CD4-positive, alpha-beta memory T cell (primary cell): ENCODE measurements at regions of chr5 and their contacts with region 1.

Region 1: DNA sequence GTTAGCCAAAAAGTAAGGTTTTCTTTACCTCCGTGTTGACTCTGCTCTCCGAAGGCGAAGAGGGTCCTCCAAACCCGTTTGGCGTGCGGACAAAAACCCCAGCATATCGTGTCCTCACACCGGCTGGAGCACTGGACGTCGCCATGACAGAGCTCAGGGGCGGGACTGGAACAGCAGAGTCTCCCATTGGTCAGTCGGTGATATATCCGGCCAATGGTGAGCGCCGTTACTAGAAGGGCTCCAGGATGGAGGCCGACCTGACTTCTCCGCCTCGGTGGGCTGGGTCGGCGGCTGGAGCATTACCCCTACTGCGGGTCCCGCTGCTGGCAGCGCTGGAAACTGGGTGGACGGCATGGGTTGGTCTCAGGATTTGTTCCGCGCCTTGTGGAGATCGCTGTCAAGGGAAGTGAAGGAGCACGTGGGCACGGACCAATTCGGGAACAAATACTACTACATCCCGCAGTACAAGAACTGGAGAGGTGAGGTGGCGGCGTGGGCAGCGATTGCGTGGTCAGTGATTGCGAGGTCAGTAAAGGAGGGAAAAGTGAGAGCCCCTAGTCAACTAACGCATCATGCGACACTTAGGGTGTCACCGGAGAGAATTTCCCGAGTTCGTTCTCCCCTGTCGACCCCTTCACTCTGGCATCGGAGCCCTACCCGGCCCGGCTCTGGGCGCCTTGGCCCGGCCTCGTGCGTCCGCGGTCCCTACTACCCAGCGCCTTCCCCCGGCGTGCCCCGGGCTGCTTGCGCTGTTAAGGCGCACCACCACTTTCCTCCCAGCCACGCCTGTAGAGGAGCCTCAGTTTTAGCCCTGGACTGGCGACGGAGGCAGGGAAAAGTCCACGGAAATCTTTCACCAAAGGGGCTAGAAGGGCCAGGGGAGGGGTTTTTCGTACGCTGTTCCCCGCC is at the starts of genes ERCC8 and NDUFAF2:
- DNase-seq: peak; percentile 86 to 90 (median 89)
- H3K4me3 ChIP-seq: peak within 1 kb of the TSS; percentile 92 to 94
- H3K4me3 Mint-ChIP-seq: no peak within 1 kb of the TSS
- H3K27ac ChIP-seq: peak within 1 kb of the TSS; percentile 60
- H3K27ac Mint-ChIP-seq: peak within 1 kb of the TSS in 3 of 7 donors; percentile 45 to 89 (median 75)
- H3K4me1 ChIP-seq: peaks cover 21% of the 10 kb centered on the region
- H3K4me1 Mint-ChIP-seq: peaks cover 18 to 28% (median 23%) of the 10 kb centered on the region in 4 donors
- H3K27me3 ChIP-seq: no peaks in the 10 kb centered on the region
- H3K27me3 Mint-ChIP-seq: no peaks in the 10 kb centered on the region
- total RNA-seq, gene ERCC8: 7.1 to 9.0 TPM
- total RNA-seq, gene NDUFAF2: 14.7 to 14.8 TPM

Region 2: GRCh38 chr5:60699530-60700382 is 245.4 kb before region 1 on chr5 and contains the start of gene DEPDC1B:
- CTCF ChIA-PET with region 1: no interaction called
- POLR2A ChIA-PET with region 1: interaction called, 3 read pairs
- intact Hi-C with region 1: loop called (anchors 2 kb)
- DNase-seq: peak; percentile 81 to 86 (median 83)
- H3K4me3 ChIP-seq: peak within 1 kb of the TSS; percentile 98 to 99
- H3K4me3 Mint-ChIP-seq: peak within 1 kb of the TSS; percentile 91 to 98 (median 94)
- H3K27ac ChIP-seq: peak within 1 kb of the TSS; percentile 61
- H3K27ac Mint-ChIP-seq: peak within 1 kb of the TSS; percentile 75 to 92 (median 88)
- H3K4me1 ChIP-seq: peaks cover 18% of the 10 kb centered on the region
- H3K4me1 Mint-ChIP-seq: peaks cover 9 to 28% (median 20%) of the 10 kb centered on the region in 4 donors
- H3K27me3 ChIP-seq: no peaks in the 10 kb centered on the region
- H3K27me3 Mint-ChIP-seq: no peaks in the 10 kb centered on the region
- total RNA-seq, gene DEPDC1B: 0.19 to 0.70 TPM

Region 3: GRCh38 chr5:60896991-60897390 is 48.2 kb before region 1 on chr5:
- CTCF ChIA-PET with region 1: no interaction called
- POLR2A ChIA-PET with region 1: no interaction called
- intact Hi-C with region 1: no loop called
- DNase-seq: no peak
- H3K4me3 ChIP-seq: no peak overlapping the region
- H3K4me3 Mint-ChIP-seq: no peak overlapping the region
- H3K27ac ChIP-seq: no peak overlapping the region
- H3K27ac Mint-ChIP-seq: no peak overlapping the region
- H3K4me1 ChIP-seq: no peaks in the 10 kb centered on the region
- H3K4me1 Mint-ChIP-seq: peaks cover 0 to 2% (median 0%) of the 10 kb centered on the region in 4 donors
- H3K27me3 ChIP-seq: no peaks in the 10 kb centered on the region
- H3K27me3 Mint-ChIP-seq: no peaks in the 10 kb centered on the region

Region 4: DNA sequence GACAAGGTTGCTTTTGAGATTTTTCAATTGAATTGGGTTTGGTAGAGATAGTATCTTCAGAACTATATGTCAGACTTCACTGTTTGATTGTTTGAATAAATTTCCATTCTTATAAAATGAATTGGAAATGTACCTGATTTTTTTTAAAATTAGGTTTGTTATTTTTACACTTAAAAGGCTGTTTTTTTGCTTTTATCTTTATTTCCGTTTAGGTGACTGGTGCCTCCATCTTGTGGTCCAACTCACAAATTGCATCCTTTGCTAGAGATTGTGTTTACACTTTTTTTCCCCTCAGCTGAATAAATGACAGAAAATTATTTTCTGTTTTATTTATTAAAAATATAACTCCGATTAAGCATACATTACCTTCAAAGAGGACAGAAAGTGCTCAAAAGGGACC is 15.4 kb after region 1 on chr5:
- CTCF ChIA-PET with region 1: interaction called, 9 read pairs
- POLR2A ChIA-PET with region 1: interaction called, 5 read pairs
- intact Hi-C with region 1: loop called (anchors 1 kb)
- DNase-seq: peak in 4 of 5 donors; percentile 8 to 24 (median 20)
- H3K4me3 ChIP-seq: no peak overlapping the region
- H3K4me3 Mint-ChIP-seq: no peak overlapping the region
- H3K27ac ChIP-seq: no peak overlapping the region
- H3K27ac Mint-ChIP-seq: no peak overlapping the region
- H3K4me1 ChIP-seq: peaks cover 8% of the 10 kb centered on the region
- H3K4me1 Mint-ChIP-seq: peaks cover 5 to 13% (median 9%) of the 10 kb centered on the region in 4 donors
- H3K27me3 ChIP-seq: no peaks in the 10 kb centered on the region
- H3K27me3 Mint-ChIP-seq: no peaks in the 10 kb centered on the region

Region 5: GRCh38 chr5:61162010-61162831 is 217.1 kb after region 1 on chr5 and contains the start of gene SMIM15:
- CTCF ChIA-PET with region 1: no interaction called
- POLR2A ChIA-PET with region 1: no interaction called
- intact Hi-C with region 1: loop called (anchors 5 kb)
- DNase-seq: peak; percentile 67 to 77 (median 72)
- H3K4me3 ChIP-seq: peak within 1 kb of the TSS; percentile 88
- H3K4me3 Mint-ChIP-seq: peak within 1 kb of the TSS; percentile 92 to 100 (median 96)
- H3K27ac ChIP-seq: peak within 1 kb of the TSS; percentile 67
- H3K27ac Mint-ChIP-seq: peak within 1 kb of the TSS; percentile 89 to 99 (median 96)
- H3K4me1 ChIP-seq: peaks cover 26% of the 10 kb centered on the region
- H3K4me1 Mint-ChIP-seq: peaks cover 29 to 46% (median 38%) of the 10 kb centered on the region in 4 donors
- H3K27me3 ChIP-seq: no peaks in the 10 kb centered on the region
- H3K27me3 Mint-ChIP-seq: no peaks in the 10 kb centered on the region
- total RNA-seq, gene SMIM15: 33.1 to 37.7 TPM

Region 6: DNA sequence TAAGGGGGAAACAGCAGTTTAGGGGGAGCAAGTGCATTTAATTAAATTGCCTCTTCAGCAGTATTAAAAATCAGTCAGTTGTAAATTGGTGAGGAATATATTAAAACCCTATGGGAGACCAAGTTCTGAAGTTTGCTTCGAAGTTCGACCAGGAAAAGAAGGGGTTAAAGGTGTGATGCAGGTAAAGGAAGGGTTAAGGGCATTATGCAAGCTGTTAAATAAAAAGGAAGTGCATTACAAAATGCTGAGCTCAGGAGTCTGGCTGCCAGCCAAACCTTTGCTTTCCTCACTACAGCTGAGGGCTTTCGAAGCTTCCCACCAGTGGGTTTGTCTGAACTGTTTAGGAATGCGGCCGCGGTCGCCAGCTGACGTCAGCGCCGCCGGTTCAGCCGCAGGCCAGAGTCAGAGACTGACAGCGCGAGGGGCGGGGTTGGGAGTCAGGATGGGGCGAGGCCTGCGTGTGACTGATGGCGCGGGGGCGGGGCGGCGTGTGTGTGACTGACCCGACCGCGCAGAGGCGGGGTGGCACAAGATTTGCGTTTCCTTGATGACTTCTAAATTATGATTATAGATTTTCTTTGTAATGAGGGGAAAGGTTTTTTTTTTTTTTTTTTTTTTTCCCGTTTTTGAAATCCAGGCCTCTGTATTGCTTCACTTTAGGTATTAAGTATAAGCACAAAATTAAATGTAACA is 463.5 kb after region 1 on chr5:
- CTCF ChIA-PET with region 1: no interaction called
- POLR2A ChIA-PET with region 1: no interaction called
- intact Hi-C with region 1: loop called (anchors 1 kb)
- DNase-seq: peak; percentile 96 to 99 (median 98)
- H3K4me3 ChIP-seq: no peak overlapping the region
- H3K4me3 Mint-ChIP-seq: peak overlapping the region; percentile 78 to 91 (median 84)
- H3K27ac ChIP-seq: no peak overlapping the region
- H3K27ac Mint-ChIP-seq: peak overlapping the region; percentile 86 to 97 (median 94)
- H3K4me1 ChIP-seq: peaks cover 19% of the 10 kb centered on the region
- H3K4me1 Mint-ChIP-seq: peaks cover 18 to 35% (median 26%) of the 10 kb centered on the region in 4 donors
- H3K27me3 ChIP-seq: no peaks in the 10 kb centered on the region
- H3K27me3 Mint-ChIP-seq: peaks cover 0 to 2% of the 10 kb centered on the region in 2 donors